Right ventricle myocardium superior (tissue), 1 donor: ENCODE measurements at regions of chr17 and their contacts with region 1.

Region 1: GRCh38 chr17:81959362-81960129 is 1.4 kb downstream of the NOTUM start:
- DNase-seq: peak; percentile 87
- ATAC-seq: peak; percentile 96

Region 2: GRCh38 chr17:82020891-82021727 is 61.6 kb after region 1 on chr17:
- intact Hi-C with region 1: loop called (anchors 2 kb)
- DNase-seq: peak; percentile 83
- ATAC-seq: peak; percentile 30

Region 3: DNA sequence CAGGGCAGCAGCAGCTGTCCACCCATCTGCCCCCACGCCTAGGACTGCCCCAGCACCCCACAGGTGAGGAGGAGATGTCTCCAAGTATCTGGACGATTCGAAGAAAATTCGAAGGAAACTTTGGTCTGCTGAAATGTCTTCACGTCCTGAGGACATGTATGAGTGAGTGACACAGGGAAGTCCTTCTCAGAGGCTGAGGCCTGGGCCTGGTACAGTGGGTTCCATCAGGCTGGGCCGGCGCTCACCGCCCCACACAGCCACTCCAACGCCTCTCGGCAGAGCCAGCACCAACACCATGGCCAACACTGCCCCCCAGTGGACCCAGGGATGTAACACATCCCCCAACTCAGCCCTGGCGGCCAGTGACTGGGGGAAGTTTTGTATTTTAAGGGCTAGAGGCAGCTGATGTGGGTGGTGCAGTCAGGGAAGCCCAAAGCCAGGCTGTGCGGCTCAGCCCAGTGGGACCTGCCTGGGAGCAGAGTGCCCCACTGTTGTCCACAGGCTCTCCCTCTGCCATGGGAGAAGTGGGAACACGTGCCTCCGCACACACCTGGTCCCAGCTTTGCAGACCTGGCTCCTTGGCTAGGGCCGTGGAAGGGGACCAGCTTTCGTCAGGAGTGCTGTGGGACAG is 194.3 kb after region 1 on chr17:
- intact Hi-C with region 1: loop called (anchors 10 kb)
- DNase-seq: peak; percentile 88
- ATAC-seq: peak; percentile 96